ENCODE measurements at regions of chrX and their contacts with region 1.

Region 1: GRCh38 chrX:17046478-17047097 is 100.1 kb downstream of the REPS2 start:
- DNase-seq: peak; percentile 13 to 57
- ATAC-seq: peak in 2 of 3 donors; percentile 53 to 59
- H3K4me3 ChIP-seq: no peak overlapping the region
- H3K4me3 Mint-ChIP-seq: no peak overlapping the region
- H3K27ac ChIP-seq: no peak overlapping the region
- H3K27ac Mint-ChIP-seq: no peak overlapping the region
- H3K4me1 ChIP-seq: no peaks in the 10 kb centered on the region
- H3K4me1 Mint-ChIP-seq: no peaks in the 10 kb centered on the region
- H3K27me3 ChIP-seq: no peaks in the 10 kb centered on the region
- H3K27me3 Mint-ChIP-seq: peaks cover 0 to 6% of the 10 kb centered on the region in 2 donors
- CTCF ChIP-seq: peak; percentile 60

Region 2: GRCh38 chrX:16826207-16826606 is 220.4 kb before region 1 on chrX:
- intact Hi-C with region 1: loop called (anchors 2 kb)
- DNase-seq: peak in 1 of 2 donors; percentile 47
- ATAC-seq: peak in 2 of 3 donors; percentile 42 to 55
- H3K4me3 ChIP-seq: no peak overlapping the region
- H3K4me3 Mint-ChIP-seq: no peak overlapping the region
- H3K27ac ChIP-seq: no peak overlapping the region
- H3K27ac Mint-ChIP-seq: no peak overlapping the region
- H3K4me1 ChIP-seq: no peaks in the 10 kb centered on the region
- H3K4me1 Mint-ChIP-seq: no peaks in the 10 kb centered on the region
- H3K27me3 ChIP-seq: no peaks in the 10 kb centered on the region
- H3K27me3 Mint-ChIP-seq: no peaks in the 10 kb centered on the region
- CTCF ChIP-seq: peak; percentile 48

Region 3: GRCh38 chrX:16882702-16883486 is 163.7 kb before region 1 on chrX:
- intact Hi-C with region 1: loop called (anchors 5 kb)
- DNase-seq: peak; percentile 42 to 81
- ATAC-seq: peak; percentile 78 to 82 (median 79)
- H3K4me3 ChIP-seq: peak overlapping the region; percentile 58
- H3K4me3 Mint-ChIP-seq: peak overlapping the region; percentile 85
- H3K27ac ChIP-seq: peak overlapping the region; percentile 78
- H3K27ac Mint-ChIP-seq: peak overlapping the region; percentile 75 to 79
- H3K4me1 ChIP-seq: peaks cover 5% of the 10 kb centered on the region
- H3K4me1 Mint-ChIP-seq: peaks cover 7 to 16% of the 10 kb centered on the region in 2 donors
- H3K27me3 ChIP-seq: no peaks in the 10 kb centered on the region
- H3K27me3 Mint-ChIP-seq: peaks cover 0 to 20% of the 10 kb centered on the region in 2 donors
- CTCF ChIP-seq: peak; percentile 59

Region 4: GRCh38 chrX:17012465-17012864 is 34.1 kb before region 1 on chrX:
- intact Hi-C with region 1: no loop called
- DNase-seq: no peak
- ATAC-seq: no peak
- H3K4me3 ChIP-seq: no peak overlapping the region
- H3K4me3 Mint-ChIP-seq: no peak overlapping the region
- H3K27ac ChIP-seq: no peak overlapping the region
- H3K27ac Mint-ChIP-seq: no peak overlapping the region
- H3K4me1 ChIP-seq: no peaks in the 10 kb centered on the region
- H3K4me1 Mint-ChIP-seq: no peaks in the 10 kb centered on the region
- H3K27me3 ChIP-seq: no peaks in the 10 kb centered on the region
- H3K27me3 Mint-ChIP-seq: peaks cover 0 to 20% of the 10 kb centered on the region in 2 donors
- CTCF ChIP-seq: no peak